Common myeloid progenitor, CD34-positive (primary cell): ENCODE measurements at regions of chr3 and their contacts with region 1.

Region 1: GRCh38 chr3:126530171-126531050 is 6.5 kb downstream of the CHST13 start:
- DNase-seq: peak; percentile 85 to 97 (median 94)
- H3K4me3 ChIP-seq: peak overlapping the region in 4 of 7 experiments; percentile 26 to 62 (median 50)
- H3K27ac ChIP-seq: peak overlapping the region; percentile 48 to 69
- H3K4me1 ChIP-seq: peaks cover 14 to 85% (median 78%) of the 10 kb centered on the region in 4 experiments
- H3K27me3 ChIP-seq: no peaks in the 10 kb centered on the region

Region 2: GRCh38 chr3:126509597-126510307 is 20.7 kb before region 1 on chr3:
- CTCF ChIA-PET with region 1: no interaction called
- POLR2A ChIA-PET with region 1: no interaction called
- DNase-seq: no peak
- H3K4me3 ChIP-seq: no peak overlapping the region
- H3K27ac ChIP-seq: no peak overlapping the region
- H3K4me1 ChIP-seq: peaks cover 1 to 15% (median 3%) of the 10 kb centered on the region in 4 experiments
- H3K27me3 ChIP-seq: no peaks in the 10 kb centered on the region

Region 3: GRCh38 chr3:126544596-126545281 is 14.3 kb after region 1 on chr3:
- CTCF ChIA-PET with region 1: interaction called, 10 read pairs
- POLR2A ChIA-PET with region 1: interaction called, 3 read pairs
- DNase-seq: no peak
- H3K4me3 ChIP-seq: no peak overlapping the region
- H3K27ac ChIP-seq: no peak overlapping the region
- H3K4me1 ChIP-seq: peaks cover 2 to 82% (median 72%) of the 10 kb centered on the region in 4 experiments
- H3K27me3 ChIP-seq: no peaks in the 10 kb centered on the region